Cardiac septum (tissue), 1 donor: ENCODE measurements at regions of chr15 and their contacts with region 1.

Region 1: GRCh38 chr15:38059665-38060064 is 125.2 kb downstream of the TMCO5A start:
- DNase-seq: no peak

Region 2: GRCh38 chr15:36658312-36658711 is 1401.4 kb before region 1 on chr15:
- intact Hi-C with region 1: no loop called
- DNase-seq: no peak

Region 3: DNA sequence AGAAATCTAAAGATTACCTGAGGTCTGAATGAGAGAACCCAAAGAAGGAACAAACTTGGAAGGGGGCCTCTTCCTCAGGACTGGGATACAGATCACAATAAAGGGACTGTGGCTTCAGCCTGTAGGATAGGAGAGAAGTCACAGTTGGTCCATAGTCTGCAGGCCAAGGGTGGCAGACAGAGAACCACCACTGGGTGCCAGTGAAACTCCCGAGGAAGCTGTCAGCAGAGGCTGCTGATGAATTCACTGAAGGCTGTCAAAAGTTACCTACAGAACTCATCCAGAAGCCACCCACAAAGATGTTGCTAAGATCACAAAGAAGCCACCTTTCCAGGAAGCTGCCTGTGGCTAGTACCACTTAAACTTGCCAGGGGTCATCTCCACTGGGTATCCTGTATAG is 46.8 kb before region 1 on chr15:
- intact Hi-C with region 1: loop called (anchors 5 kb)
- DNase-seq: no peak